ENCODE measurements at regions of chr2 and their contacts with region 1.

Region 1: GRCh38 chr2:216412022-216412999 is at the start of gene SMARCAL1:
- DNase-seq: peak; percentile 94
- ATAC-seq: peak; percentile 88
- H3K4me3 ChIP-seq: peak within 1 kb of the TSS; percentile 73 to 79
- H3K27ac ChIP-seq: peak within 1 kb of the TSS; percentile 72
- H3K4me1 ChIP-seq: peaks cover 0 to 11% of the 10 kb centered on the region in 2 experiments; a peak in 2 of 4 replicates
- H3K27me3 ChIP-seq: peaks cover 2% of the 10 kb centered on the region; the same call in 1 of the 2 replicates
- CTCF ChIP-seq: no peak
- POLR2A ChIP-seq: peak; percentile 14
- RAD21 ChIP-seq: no peak
- total RNA-seq, gene SMARCAL1: 18.0 TPM

Region 2: DNA sequence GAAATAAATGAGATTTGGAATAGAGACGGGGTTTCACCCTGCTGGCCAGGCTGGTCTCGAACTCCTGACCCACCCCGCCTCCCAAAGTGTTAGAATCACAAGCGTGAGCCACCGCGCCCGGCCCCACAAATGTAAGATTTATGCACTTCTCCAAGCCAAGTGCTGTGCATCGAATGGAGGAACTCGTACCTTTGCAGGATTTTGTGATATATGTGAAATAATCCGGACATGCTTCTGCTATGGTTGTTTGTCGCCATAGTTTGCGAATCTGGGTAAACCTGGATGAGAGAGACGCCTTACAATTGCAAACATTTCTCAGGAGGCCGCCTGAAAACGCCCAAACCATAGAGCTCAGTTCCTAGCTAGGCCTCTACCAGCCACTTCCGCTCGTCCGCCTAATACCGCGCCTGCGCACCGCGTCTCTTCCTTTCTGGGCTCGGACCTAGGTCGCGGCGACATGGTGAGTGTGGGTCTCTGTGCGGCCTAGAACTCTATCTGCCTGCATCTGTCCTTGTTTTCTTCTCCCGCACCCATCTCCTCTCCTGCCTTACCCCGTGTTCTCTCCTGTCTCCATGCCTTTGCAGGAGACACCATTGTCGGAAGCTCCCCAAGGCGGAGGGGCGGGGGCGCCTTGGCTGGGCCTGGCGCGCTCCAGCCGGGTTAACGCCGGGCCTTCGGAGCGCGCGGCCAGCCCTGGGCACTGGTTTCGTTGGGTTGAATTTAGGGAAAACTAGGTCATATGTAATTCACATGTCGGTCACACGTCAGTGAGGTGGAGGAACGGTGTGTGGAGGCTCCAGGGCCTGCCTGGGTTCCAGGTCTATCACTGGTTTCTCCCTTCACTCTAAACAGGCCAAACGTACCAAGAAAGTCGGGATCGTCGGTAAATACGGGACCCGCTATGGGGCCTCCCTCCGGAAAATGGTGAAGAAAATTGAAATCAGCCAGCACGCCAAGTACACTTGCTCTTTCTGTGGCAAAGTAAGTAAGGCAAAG is 86.4 kb after region 1 on chr2 and contains the start of gene RPL37A:
- CTCF ChIA-PET with region 1: no interaction called
- POLR2A ChIA-PET with region 1: interaction called, 9 read pairs
- RAD21 ChIA-PET with region 1: no interaction called
- intact Hi-C with region 1: loop called (anchors 5 kb)
- DNase-seq: peak; percentile 94
- ATAC-seq: peak; percentile 90
- H3K4me3 ChIP-seq: peak within 1 kb of the TSS; percentile 86 to 98
- H3K27ac ChIP-seq: peak within 1 kb of the TSS; percentile 87
- H3K4me1 ChIP-seq: peaks cover 4 to 29% of the 10 kb centered on the region in 2 experiments; a peak in 3 of 4 replicates
- H3K27me3 ChIP-seq: no peaks in the 10 kb centered on the region
- CTCF ChIP-seq: no peak
- POLR2A ChIP-seq: peak; percentile 98
- RAD21 ChIP-seq: no peak
- total RNA-seq, gene RPL37A: 3,018 TPM

Region 3: GRCh38 chr2:216687646-216688045 is 275.3 kb after region 1 on chr2:
- CTCF ChIA-PET with region 1: no interaction called
- POLR2A ChIA-PET with region 1: no interaction called
- RAD21 ChIA-PET with region 1: no interaction called
- intact Hi-C with region 1: loop called (anchors 10 kb)
- DNase-seq: peak; percentile 26
- ATAC-seq: peak; percentile 72
- H3K4me3 ChIP-seq: no peak overlapping the region
- H3K27ac ChIP-seq: no peak overlapping the region
- H3K4me1 ChIP-seq: peaks cover 0 to 27% of the 10 kb centered on the region in 2 experiments; a peak in 2 of 4 replicates
- H3K27me3 ChIP-seq: no peaks in the 10 kb centered on the region
- CTCF ChIP-seq: peak; percentile 40 to 87 (median 64); a peak in 5 of 6 replicates
- POLR2A ChIP-seq: no peak
- RAD21 ChIP-seq: peak; percentile 48

Measured in HCT116 (cell line).